Prostate gland (tissue), 2 donors: ENCODE measurements at regions of chr11 and their contacts with region 1.

Region 1: GRCh38 chr11:111601979-111602864 is at the start of gene SIK2:
- DNase-seq: peak; percentile 94
- H3K4me3 ChIP-seq: peak within 1 kb of the TSS; percentile 79 to 90
- H3K27ac ChIP-seq: peak within 1 kb of the TSS; percentile 96 to 97
- H3K4me1 ChIP-seq: no peaks in the 10 kb centered on the region
- H3K27me3 ChIP-seq: no peaks in the 10 kb centered on the region
- CTCF ChIP-seq: peak; percentile 86 to 99 (median 95)
- POLR2A ChIP-seq: peak; percentile 53
- total RNA-seq, gene SIK2: 13.0 to 18.7 TPM

Region 2: GRCh38 chr11:111729087-111729830 is 127.0 kb after region 1 on chr11:
- intact Hi-C with region 1: loop called (anchors 5 kb)
- DNase-seq: no peak
- H3K4me3 ChIP-seq: no peak overlapping the region
- H3K27ac ChIP-seq: peak overlapping the region; percentile 31 to 82
- H3K4me1 ChIP-seq: peaks cover 11% of the 10 kb centered on the region
- H3K27me3 ChIP-seq: no peaks in the 10 kb centered on the region
- CTCF ChIP-seq: no peak
- POLR2A ChIP-seq: no peak

Region 3: DNA sequence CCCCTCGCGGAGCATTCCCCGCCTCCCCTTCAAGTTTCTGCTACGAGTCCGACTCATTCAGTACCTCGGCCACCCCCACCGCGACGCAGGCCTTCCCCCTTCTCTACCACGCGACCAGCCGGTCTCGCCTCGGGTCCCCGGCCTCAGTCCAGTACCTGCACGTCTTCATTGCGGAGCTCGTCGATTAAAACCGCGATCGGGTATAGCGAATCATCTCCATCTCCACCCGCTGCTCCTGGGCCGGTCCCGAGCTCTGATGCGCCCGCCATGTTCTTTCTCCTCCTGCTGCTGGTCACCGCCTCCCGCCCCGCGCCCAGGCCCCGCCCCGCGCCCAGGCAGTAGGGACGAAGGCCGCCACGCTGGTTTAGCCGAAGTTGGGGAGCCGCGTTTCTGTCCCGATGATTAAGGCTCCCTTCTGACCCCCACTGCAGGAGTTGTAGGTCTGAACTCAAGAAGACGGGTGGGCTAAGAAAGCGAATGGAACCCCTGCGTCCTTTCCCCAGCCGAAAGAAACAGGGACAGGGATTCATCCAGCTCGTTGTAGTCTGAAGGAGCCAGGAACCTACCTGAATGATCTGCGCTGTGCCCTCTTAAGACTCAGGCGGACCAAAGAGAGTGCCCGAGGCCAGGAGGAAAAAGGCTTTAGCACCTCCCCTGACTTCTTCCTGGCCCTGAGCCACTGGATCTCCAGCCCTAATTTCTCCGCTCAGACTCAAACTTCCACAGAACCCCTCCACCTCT is 164.0 kb after region 1 on chr11 and contains the start of gene PPP2R1B:
- intact Hi-C with region 1: loop called (anchors 2 kb)
- DNase-seq: peak; percentile 82
- H3K4me3 ChIP-seq: peak within 1 kb of the TSS; percentile 64 to 91
- H3K27ac ChIP-seq: peak within 1 kb of the TSS; percentile 87 to 93
- H3K4me1 ChIP-seq: no peaks in the 10 kb centered on the region
- H3K27me3 ChIP-seq: no peaks in the 10 kb centered on the region
- CTCF ChIP-seq: no peak
- POLR2A ChIP-seq: peak; percentile 67
- total RNA-seq, gene PPP2R1B: 15.4 to 41.4 TPM

Region 4: DNA sequence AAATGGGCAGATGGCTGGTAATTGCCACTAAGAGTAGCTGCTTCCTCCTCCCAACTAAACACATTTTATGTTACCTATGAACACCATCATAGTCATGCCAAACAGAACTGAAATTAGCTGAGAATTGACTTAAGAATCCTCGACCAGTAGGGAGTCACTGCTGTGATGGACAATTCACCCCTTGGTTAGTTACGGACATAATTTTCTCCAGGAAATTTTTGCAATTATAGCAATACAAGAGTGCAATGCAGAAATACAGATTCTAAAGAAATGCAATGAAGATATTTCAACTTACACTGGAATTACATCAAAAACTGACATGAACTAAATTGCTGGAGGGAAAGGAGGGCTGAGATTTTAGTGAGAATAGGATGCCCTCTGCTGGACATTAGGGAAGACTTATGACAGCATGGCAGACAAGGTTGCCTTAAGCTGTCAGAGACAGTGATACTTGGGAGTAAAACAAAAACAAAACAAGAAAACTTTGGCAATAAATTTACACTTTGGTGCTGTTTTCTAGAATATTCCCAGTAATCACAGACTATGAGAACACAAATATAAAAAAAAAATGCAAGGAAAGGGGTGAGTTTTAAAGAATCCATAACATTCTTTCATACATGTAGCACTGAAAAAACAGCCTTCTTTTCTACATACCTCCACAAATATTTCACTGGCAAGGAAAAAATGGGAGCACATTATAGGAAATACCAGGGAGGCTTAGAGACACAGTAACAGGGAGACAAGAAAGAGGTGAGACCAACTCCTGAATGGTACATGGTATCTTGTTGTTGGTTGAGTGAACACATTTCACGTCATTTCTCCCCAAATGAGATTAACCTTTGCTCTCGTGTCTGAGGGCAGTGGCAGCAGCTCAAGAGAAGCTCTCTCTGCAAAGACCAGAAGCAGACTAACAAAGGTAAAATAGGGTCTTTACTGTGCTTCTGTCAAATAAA is 175.1 kb after region 1 on chr11:
- intact Hi-C with region 1: loop called (anchors 1 kb)
- DNase-seq: peak; percentile 45
- H3K4me3 ChIP-seq: no peak overlapping the region
- H3K27ac ChIP-seq: no peak overlapping the region
- H3K4me1 ChIP-seq: no peaks in the 10 kb centered on the region
- H3K27me3 ChIP-seq: no peaks in the 10 kb centered on the region
- CTCF ChIP-seq: peak; percentile 37 to 89 (median 80)
- POLR2A ChIP-seq: no peak

Region 5: DNA sequence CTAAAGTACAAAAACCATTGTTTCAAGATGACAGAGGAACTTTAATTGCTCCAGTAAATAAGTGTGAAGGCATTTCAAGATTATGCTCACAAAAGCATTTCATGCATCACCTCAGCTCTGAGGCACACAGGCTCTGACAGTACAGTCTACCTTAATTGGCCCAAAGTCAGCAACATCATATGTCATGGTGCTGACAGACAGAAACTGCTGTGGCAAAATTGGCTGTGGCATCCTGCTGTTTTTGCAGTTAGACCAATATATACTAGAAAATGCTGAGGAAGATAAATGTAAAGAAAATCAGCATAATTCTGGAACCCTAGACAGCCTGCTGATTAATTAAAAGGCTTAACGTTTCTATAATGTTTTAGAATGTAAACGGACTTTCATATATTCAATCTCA is 198.9 kb after region 1 on chr11:
- intact Hi-C with region 1: no loop called
- DNase-seq: no peak
- H3K4me3 ChIP-seq: no peak overlapping the region
- H3K27ac ChIP-seq: peak overlapping the region in 1 of 2 donors; percentile 54
- H3K4me1 ChIP-seq: no peaks in the 10 kb centered on the region
- H3K27me3 ChIP-seq: no peaks in the 10 kb centered on the region
- CTCF ChIP-seq: no peak
- POLR2A ChIP-seq: no peak